B cell (primary cell): ENCODE measurements at regions of chr12 and their contacts with region 1.

Region 1: GRCh38 chr12:111788178-111788654 is 21.5 kb downstream of the ALDH2 start:
- DNase-seq: peak; percentile 40
- ATAC-seq: peak; percentile 62
- H3K4me3 ChIP-seq: no peak overlapping the region
- H3K4me3 Mint-ChIP-seq: no peak overlapping the region
- H3K27ac ChIP-seq: no peak overlapping the region
- H3K27ac Mint-ChIP-seq: no peak overlapping the region
- H3K4me1 ChIP-seq: no peaks in the 10 kb centered on the region
- H3K4me1 Mint-ChIP-seq: no peaks in the 10 kb centered on the region
- H3K27me3 ChIP-seq: no peaks in the 10 kb centered on the region
- H3K27me3 Mint-ChIP-seq: no peaks in the 10 kb centered on the region
- CTCF ChIP-seq: peak; percentile 52

Region 2: GRCh38 chr12:111741235-111741812 is 46.9 kb before region 1 on chr12:
- CTCF ChIA-PET with region 1: no interaction called
- POLR2A ChIA-PET with region 1: no interaction called
- intact Hi-C with region 1: no loop called
- DNase-seq: no peak
- ATAC-seq: no peak
- H3K4me3 ChIP-seq: no peak overlapping the region
- H3K4me3 Mint-ChIP-seq: no peak overlapping the region
- H3K27ac ChIP-seq: no peak overlapping the region
- H3K27ac Mint-ChIP-seq: no peak overlapping the region
- H3K4me1 ChIP-seq: no peaks in the 10 kb centered on the region
- H3K4me1 Mint-ChIP-seq: no peaks in the 10 kb centered on the region
- H3K27me3 ChIP-seq: no peaks in the 10 kb centered on the region
- H3K27me3 Mint-ChIP-seq: no peaks in the 10 kb centered on the region
- CTCF ChIP-seq: no peak

Region 3: DNA sequence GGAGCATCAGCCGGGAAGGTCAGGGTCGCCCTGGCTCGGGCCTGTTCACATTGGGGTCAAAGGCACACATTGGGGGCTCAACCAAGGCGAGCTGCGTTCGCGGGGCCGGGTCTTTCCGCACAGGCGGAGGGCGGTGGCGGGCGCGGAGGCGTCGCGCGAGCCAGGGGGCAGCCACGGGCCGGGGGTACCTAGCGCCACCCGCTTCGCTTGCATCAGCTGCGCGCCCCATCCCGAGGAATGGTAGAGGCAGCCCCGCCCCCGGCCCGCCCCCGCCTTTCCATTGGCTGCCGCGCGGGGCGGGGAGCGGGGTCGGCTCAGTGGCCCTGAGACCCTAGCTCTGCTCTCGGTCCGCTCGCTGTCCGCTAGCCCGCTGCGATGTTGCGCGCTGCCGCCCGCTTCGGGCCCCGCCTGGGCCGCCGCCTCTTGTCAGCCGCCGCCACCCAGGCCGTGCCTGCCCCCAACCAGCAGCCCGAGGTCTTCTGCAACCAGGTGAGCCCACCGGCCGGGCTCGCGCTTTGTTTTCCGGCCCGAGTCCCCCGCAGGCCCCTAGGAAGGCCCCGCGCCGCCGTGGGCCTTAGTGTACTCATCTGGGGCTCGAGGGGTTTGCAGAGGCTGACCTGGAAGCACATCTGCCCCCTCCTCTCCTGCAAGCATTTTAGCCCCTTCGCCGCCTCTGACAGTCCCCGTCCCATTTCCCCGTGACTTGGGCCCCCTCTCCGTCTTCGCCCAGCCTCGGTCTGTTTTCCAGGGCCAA is 21.4 kb before region 1 on chr12 and contains the start of gene ALDH2:
- CTCF ChIA-PET with region 1: interaction called, 20 read pairs
- POLR2A ChIA-PET with region 1: interaction called, 5 read pairs
- intact Hi-C with region 1: no loop called
- DNase-seq: peak; percentile 68
- ATAC-seq: peak; percentile 79
- H3K4me3 ChIP-seq: peak within 1 kb of the TSS; percentile 2 to 74 (median 62)
- H3K4me3 Mint-ChIP-seq: peak within 1 kb of the TSS; percentile 78
- H3K27ac ChIP-seq: peak within 1 kb of the TSS in 1 of 2 donors; percentile 55
- H3K27ac Mint-ChIP-seq: peak within 1 kb of the TSS; percentile 71
- H3K4me1 ChIP-seq: peaks cover 47 to 53% of the 10 kb centered on the region in 2 donors
- H3K4me1 Mint-ChIP-seq: peaks cover 57% of the 10 kb centered on the region
- H3K27me3 ChIP-seq: no peaks in the 10 kb centered on the region
- H3K27me3 Mint-ChIP-seq: no peaks in the 10 kb centered on the region
- CTCF ChIP-seq: no peak
- total RNA-seq, gene ALDH2: 22.3 TPM in 2 replicates

Region 4: GRCh38 chr12:111826316-111826715 is 38.1 kb after region 1 on chr12:
- CTCF ChIA-PET with region 1: no interaction called
- POLR2A ChIA-PET with region 1: no interaction called
- intact Hi-C with region 1: no loop called
- DNase-seq: no peak
- ATAC-seq: no peak
- H3K4me3 ChIP-seq: no peak overlapping the region
- H3K4me3 Mint-ChIP-seq: no peak overlapping the region
- H3K27ac ChIP-seq: no peak overlapping the region
- H3K27ac Mint-ChIP-seq: no peak overlapping the region
- H3K4me1 ChIP-seq: no peaks in the 10 kb centered on the region
- H3K4me1 Mint-ChIP-seq: no peaks in the 10 kb centered on the region
- H3K27me3 ChIP-seq: no peaks in the 10 kb centered on the region
- H3K27me3 Mint-ChIP-seq: peaks cover 23% of the 10 kb centered on the region
- CTCF ChIP-seq: no peak

Region 5: GRCh38 chr12:111873113-111873512 is 84.9 kb after region 1 on chr12:
- CTCF ChIA-PET with region 1: no interaction called
- POLR2A ChIA-PET with region 1: no interaction called
- intact Hi-C with region 1: no loop called
- DNase-seq: no peak
- ATAC-seq: no peak
- H3K4me3 ChIP-seq: no peak overlapping the region
- H3K4me3 Mint-ChIP-seq: no peak overlapping the region
- H3K27ac ChIP-seq: no peak overlapping the region
- H3K27ac Mint-ChIP-seq: no peak overlapping the region
- H3K4me1 ChIP-seq: no peaks in the 10 kb centered on the region
- H3K4me1 Mint-ChIP-seq: no peaks in the 10 kb centered on the region
- H3K27me3 ChIP-seq: no peaks in the 10 kb centered on the region
- H3K27me3 Mint-ChIP-seq: no peaks in the 10 kb centered on the region
- CTCF ChIP-seq: no peak